Ascending aorta (tissue), 2 donors: ENCODE measurements at regions of chr10 and their contacts with region 1.

Region 1: DNA sequence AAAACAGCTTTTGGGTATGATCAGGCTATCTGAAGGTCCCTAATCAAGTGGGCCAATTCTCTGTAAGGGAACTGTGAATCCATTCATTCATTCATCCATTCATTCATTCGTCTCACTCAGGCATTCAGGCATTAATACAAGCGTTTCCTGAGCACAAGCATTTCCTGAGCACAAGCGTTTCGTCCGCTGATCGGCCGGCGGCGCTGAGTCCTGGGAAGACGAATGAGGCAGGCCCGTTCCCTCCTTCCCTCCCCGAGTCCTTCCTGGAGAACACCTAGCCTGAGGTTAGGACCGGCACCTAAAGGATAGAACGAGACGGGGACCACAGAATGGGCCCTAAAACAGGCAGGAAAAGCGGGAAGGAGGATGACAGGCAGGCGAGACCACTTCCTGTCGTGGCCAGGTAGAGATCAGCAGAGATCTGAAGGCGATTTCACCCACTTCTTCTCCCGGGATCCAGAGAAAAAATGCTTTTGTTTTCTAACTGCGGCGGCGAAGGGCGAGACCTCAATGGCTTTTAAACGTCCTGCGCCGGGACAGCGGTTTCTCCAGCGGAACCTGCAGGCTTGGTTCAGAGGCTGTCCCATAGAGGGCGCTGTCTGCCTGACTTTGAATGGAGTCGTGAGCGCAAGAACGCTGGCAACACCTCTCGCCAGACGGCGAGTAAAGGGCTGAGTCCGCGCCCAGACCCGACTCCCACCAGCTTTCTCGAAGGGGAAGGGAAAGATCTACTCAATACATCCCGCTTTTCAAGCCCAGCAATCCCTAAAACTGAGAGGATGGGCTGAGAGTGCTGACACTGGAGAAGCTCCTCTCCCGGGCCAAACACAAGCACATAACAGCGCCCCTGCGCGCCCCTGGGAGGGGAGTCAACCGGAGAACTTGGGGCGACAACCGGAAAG is 2.9 kb upstream of the HMX3 start:
- DNase-seq: peak in 1 of 2 donors; percentile 85
- H3K4me3 ChIP-seq: peak overlapping the region; percentile 11 to 22
- H3K27ac ChIP-seq: no peak overlapping the region
- H3K4me1 ChIP-seq: peaks cover 15 to 36% of the 10 kb centered on the region in 2 donors
- H3K27me3 ChIP-seq: peaks cover 45% of the 10 kb centered on the region
- CTCF ChIP-seq: peak; percentile 66 to 91 (median 90)

Region 2: GRCh38 chr10:122812751-122813150 is 320.1 kb before region 1 on chr10:
- intact Hi-C with region 1: no loop called
- DNase-seq: no peak
- H3K4me3 ChIP-seq: no peak overlapping the region
- H3K27ac ChIP-seq: no peak overlapping the region
- H3K4me1 ChIP-seq: no peaks in the 10 kb centered on the region
- H3K27me3 ChIP-seq: no peaks in the 10 kb centered on the region
- CTCF ChIP-seq: no peak

Region 3: DNA sequence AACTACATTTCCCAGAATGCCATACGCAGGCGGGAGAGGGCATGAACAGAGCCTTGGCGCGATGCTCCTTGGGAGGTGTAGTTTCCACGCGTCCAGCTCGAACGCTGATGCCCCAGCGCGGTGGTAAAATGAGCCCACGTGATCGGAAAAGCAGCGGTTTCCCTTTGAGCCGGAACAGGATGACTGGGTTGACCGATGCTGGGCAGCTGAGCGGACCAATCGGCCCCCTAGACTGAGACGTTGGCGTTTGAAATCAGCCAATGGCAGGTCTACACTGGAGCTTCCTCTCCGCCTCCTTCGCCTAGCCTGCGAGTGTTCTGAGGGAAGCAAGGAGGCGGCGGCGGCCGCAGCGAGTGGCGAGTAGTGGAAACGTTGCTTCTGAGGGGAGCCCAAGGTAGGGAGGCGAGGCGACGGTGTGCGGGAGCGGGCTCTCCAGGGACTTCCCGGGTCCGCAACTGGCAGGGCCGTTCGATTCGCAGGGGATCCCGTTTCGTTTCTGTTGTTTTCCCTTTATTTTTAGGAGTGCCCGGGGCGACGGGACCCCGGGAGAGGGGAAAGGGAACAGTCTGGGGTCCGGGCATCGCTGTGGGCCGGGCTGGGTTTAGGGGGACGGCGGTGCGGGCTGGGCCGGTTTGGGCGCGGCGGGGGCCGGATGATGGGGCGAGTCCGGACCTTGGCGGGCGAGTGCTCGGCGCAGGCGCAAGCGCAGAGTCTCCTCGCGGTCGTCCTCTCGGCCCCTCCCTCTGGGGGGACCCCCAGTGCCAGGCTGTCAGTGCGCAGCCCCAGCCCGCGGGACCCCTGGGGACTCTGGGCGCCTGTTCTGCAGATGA is 21.5 kb after region 1 on chr10 and contains the start of gene BUB3:
- intact Hi-C with region 1: loop called (anchors 2 kb)
- DNase-seq: peak; percentile 95 to 99
- H3K4me3 ChIP-seq: peak within 1 kb of the TSS; percentile 74 to 92
- H3K27ac ChIP-seq: peak within 1 kb of the TSS; percentile 75 to 90
- H3K4me1 ChIP-seq: peaks cover 8 to 19% of the 10 kb centered on the region in 2 donors
- H3K27me3 ChIP-seq: peaks cover 16% of the 10 kb centered on the region
- CTCF ChIP-seq: peak in 2 of 3 experiments; percentile 5 to 30
- total RNA-seq, gene BUB3: 12.2 TPM

Region 4: DNA sequence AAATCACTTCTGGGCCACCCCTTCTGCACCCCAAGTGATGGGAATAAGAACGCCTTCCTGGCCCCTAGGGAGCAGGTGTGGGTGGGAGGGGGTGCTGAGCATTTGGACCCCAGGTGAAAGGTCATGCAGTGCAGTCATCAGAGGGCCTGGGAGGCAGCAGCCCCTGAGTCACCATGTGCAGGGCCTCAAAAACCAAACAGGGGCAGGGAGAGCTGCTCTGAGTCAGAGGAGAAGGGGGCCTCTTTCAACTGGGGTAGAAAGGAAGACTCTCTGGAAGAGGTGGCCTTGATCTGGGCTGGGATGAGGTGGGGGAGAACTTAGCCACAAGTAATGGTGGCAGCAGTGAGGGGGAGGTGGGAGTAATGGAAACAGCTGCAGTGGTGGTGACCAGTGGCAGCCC is 185.7 kb after region 1 on chr10:
- intact Hi-C with region 1: no loop called
- DNase-seq: no peak
- H3K4me3 ChIP-seq: no peak overlapping the region
- H3K27ac ChIP-seq: no peak overlapping the region
- H3K4me1 ChIP-seq: no peaks in the 10 kb centered on the region
- H3K27me3 ChIP-seq: no peaks in the 10 kb centered on the region
- CTCF ChIP-seq: no peak

Region 5: GRCh38 chr10:123559066-123559822 is 426.4 kb after region 1 on chr10:
- intact Hi-C with region 1: loop called (anchors 1 kb)
- DNase-seq: peak in 1 of 2 donors; percentile 73
- H3K4me3 ChIP-seq: no peak overlapping the region
- H3K27ac ChIP-seq: no peak overlapping the region
- H3K4me1 ChIP-seq: no peaks in the 10 kb centered on the region
- H3K27me3 ChIP-seq: no peaks in the 10 kb centered on the region
- CTCF ChIP-seq: peak; percentile 85 to 97 (median 95)